ENCODE measurements at regions of chr4 and their contacts with region 1.

Region 1: DNA sequence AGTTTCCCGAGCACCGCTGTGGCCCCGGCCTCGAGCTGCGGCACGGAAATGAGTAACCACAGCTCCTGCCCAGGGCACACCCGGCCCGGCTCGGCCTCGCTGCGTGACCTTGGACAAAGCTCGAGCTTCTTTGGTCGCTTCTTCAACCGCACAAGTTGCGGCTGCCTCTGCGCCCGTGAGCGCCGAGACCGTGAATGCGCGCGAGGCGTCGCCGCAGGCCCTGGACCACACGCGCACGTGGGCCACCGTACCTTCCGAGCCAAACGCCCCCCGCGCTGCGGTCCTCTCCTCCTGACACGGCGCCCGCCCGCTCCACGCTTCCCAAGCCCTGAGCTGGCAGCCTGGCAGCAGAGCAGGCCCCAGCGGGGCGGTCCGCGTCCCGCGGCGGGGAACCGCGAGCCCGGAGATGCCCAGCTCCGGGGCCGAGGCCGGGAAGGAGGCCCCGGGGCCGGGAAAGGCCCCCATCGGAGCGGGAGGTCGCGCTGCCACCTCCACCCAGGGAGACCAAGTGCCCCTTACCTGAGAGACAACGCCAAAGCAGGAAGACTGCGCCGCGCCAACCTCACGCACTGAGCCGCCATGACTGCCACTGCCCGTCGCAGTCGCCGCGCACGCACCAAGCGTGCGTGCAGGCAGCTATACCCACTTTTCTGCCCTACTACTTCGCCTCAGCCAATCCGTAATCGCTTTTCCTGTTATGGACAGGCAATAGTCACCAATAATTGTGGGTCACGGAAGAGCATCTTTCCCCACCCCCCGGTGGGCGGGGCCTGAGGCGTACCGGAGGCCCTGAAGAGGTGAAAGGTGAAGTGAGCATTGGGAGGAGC is at the start of gene GRPEL1:
- H3K4me3 ChIP-seq: peak within 1 kb of the TSS; percentile 85
- H3K27ac ChIP-seq: peak within 1 kb of the TSS; percentile 66; the same call in 1 of the 2 replicates
- H3K4me1 ChIP-seq: peaks cover 2% of the 10 kb centered on the region; the same call in 1 of the 2 replicates
- CTCF ChIP-seq: peak; percentile 72

Region 2: GRCh38 chr4:6716018-6716911 is 351.4 kb before region 1 on chr4 and contains the start of gene BLOC1S4:
- CTCF ChIA-PET with region 1: interaction called, 18 read pairs
- POLR2A ChIA-PET with region 1: interaction called, 6 read pairs
- H3K4me3 ChIP-seq: peak within 1 kb of the TSS; percentile 70
- H3K27ac ChIP-seq: peak within 1 kb of the TSS; percentile 83
- H3K4me1 ChIP-seq: no peaks in the 10 kb centered on the region
- CTCF ChIP-seq: no peak; the same call in 1 of the 2 replicates

Region 3: GRCh38 chr4:7042697-7043464 is 24.8 kb before region 1 on chr4 and contains the start of gene TADA2B:
- CTCF ChIA-PET with region 1: interaction called, 20 read pairs
- POLR2A ChIA-PET with region 1: interaction called, 14 read pairs
- H3K4me3 ChIP-seq: peak within 1 kb of the TSS; percentile 90
- H3K27ac ChIP-seq: peak within 1 kb of the TSS; percentile 78; the same call in 1 of the 2 replicates
- H3K4me1 ChIP-seq: no peaks in the 10 kb centered on the region
- CTCF ChIP-seq: no peak

Region 4: GRCh38 chr4:7081891-7082471 is 14.3 kb after region 1 on chr4:
- CTCF ChIA-PET with region 1: interaction called, 69 read pairs
- POLR2A ChIA-PET with region 1: interaction called, 5 read pairs
- H3K4me3 ChIP-seq: no peak overlapping the region
- H3K27ac ChIP-seq: no peak overlapping the region
- H3K4me1 ChIP-seq: no peaks in the 10 kb centered on the region
- CTCF ChIP-seq: peak; percentile 39

Region 5: DNA sequence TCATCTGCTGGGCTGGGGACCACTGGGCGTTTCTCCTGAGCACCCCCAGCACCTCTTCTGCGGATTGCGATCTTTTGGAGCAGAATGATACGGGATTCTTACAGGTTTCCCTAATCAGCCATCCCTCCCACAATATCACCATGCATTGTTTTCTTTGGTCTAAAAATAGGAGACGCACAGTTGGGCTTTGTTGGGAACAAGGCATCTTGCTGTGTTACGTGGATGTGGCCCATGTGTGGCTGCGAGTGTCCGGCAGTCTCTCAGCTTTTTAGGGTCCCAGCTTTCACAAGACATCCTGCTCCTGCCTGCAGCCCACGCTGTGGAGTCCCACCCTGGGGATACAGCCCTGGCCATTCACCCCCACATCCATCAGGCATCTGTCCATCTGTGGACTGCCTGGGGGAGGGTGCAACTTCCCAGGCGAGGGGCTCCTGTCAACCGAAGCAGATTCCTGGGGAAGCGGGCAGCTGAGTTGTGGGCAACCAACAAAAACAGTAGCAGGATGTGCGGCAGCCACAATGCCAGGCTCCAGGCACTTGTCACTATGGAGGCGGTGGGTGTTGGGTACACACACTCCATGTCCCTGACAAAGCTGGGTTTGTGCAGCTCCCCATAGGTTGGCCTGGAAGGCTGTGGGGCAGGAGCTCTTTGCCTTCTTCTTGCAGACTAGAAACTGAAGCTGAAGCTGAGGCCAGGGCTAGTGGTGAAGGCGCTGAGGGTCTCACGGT is 552.6 kb after region 1 on chr4:
- CTCF ChIA-PET with region 1: no interaction called
- POLR2A ChIA-PET with region 1: no interaction called
- H3K4me3 ChIP-seq: no peak overlapping the region
- H3K27ac ChIP-seq: no peak overlapping the region
- H3K4me1 ChIP-seq: no peaks in the 10 kb centered on the region
- CTCF ChIP-seq: no peak